H1 (cell line): ENCODE measurements at regions of chr18 and their contacts with region 1.

Region 1: GRCh38 chr18:31942999-31943865 is at the start of gene TRAPPC8:
- DNase-seq: peak; percentile 93 to 94
- H3K4me3 ChIP-seq: peak within 1 kb of the TSS; percentile 67 to 98 (median 98)
- H3K27ac ChIP-seq: peak within 1 kb of the TSS; percentile 93
- H3K4me1 ChIP-seq: peaks cover 0 to 10% (median 4%) of the 10 kb centered on the region in 4 experiments; a peak in 4 of 7 replicates
- H3K27me3 ChIP-seq: no peaks in the 10 kb centered on the region
- CTCF ChIP-seq: peak in 2 of 3 experiments; percentile 35 to 37; a peak in 3 of 4 replicates
- EP300 ChIP-seq: no peak; a peak in 1 of 3 replicates
- POLR2A ChIP-seq: peak; percentile 92 to 98
- RAD21 ChIP-seq: peak in 1 of 2 experiments; percentile 30; a peak in 1 of 4 replicates
- total RNA-seq, gene TRAPPC8: 43.6 and 49.9 TPM in 2 replicates

Region 2: DNA sequence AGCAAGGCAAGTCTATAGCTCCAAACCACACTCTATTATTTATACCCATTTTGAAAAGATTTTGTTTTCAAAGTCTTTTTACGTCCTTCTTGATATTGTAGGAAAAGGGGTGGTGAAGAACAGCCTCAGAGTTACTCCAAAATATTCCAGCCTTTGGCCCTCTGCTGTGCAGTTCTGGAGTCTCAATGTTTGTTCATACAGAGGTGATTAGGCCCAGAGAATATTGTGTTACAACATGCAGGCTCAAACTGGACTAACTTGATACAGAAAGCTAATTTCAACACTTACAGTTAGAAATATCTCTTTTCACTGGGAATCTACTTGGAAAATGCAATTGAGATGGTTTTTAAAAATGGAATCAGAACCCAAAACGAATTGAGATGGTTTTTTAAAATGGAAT is 142.2 kb before region 1 on chr18:
- CTCF ChIA-PET with region 1: no interaction called
- POLR2A ChIA-PET with region 1: no interaction called
- DNase-seq: no peak
- H3K4me3 ChIP-seq: no peak overlapping the region
- H3K27ac ChIP-seq: no peak overlapping the region
- H3K4me1 ChIP-seq: no peaks in the 10 kb centered on the region
- H3K27me3 ChIP-seq: peaks cover 0 to 1% (median 0%) of the 10 kb centered on the region in 4 experiments; a peak in 2 of 7 replicates
- CTCF ChIP-seq: no peak
- EP300 ChIP-seq: no peak
- POLR2A ChIP-seq: no peak
- RAD21 ChIP-seq: no peak

Region 3: GRCh38 chr18:31920277-31920676 is 23.0 kb before region 1 on chr18:
- CTCF ChIA-PET with region 1: interaction called, 3 read pairs
- POLR2A ChIA-PET with region 1: interaction called, 10 read pairs
- DNase-seq: no peak
- H3K4me3 ChIP-seq: no peak overlapping the region
- H3K27ac ChIP-seq: no peak overlapping the region
- H3K4me1 ChIP-seq: no peaks in the 10 kb centered on the region
- H3K27me3 ChIP-seq: no peaks in the 10 kb centered on the region
- CTCF ChIP-seq: no peak
- EP300 ChIP-seq: no peak
- POLR2A ChIP-seq: no peak
- RAD21 ChIP-seq: no peak

Region 4: DNA sequence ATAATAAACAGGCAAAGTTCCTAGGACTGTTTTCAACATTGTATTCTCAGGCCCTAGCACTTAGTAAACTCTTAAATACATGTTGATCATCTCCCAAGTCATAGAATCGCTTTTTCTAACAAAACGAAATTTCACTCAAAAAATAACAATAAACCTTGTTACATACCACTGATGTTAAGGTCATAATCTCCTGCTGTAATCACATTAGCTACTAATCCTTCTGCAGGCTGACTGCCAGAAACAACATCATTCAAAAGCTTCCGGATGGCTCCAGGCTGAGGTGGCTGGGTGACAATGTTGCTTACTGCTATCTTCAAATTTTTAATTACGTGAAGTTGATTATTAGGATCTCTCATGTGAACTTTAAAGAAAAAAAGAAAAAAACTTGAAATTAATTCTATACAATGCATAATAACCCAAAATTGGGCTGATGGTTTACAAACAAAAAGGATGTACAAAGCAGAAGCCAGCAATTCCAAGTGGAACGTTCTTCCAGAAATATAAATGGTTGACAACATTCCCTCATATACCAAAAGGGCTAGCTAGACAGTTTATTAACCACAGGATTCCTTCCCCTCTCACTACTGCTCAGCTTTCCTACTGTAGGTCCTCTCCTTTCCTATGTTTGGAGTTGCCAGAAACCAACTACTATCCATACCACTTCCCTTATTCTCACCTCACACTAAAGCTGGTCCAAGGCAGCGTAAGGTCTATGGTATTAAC is 11.9 kb before region 1 on chr18:
- CTCF ChIA-PET with region 1: interaction called, 3 read pairs
- POLR2A ChIA-PET with region 1: interaction called, 14 read pairs
- DNase-seq: no peak
- H3K4me3 ChIP-seq: no peak overlapping the region
- H3K27ac ChIP-seq: no peak overlapping the region
- H3K4me1 ChIP-seq: no peaks in the 10 kb centered on the region
- H3K27me3 ChIP-seq: no peaks in the 10 kb centered on the region
- CTCF ChIP-seq: no peak
- EP300 ChIP-seq: no peak
- POLR2A ChIP-seq: no peak
- RAD21 ChIP-seq: no peak

Region 5: DNA sequence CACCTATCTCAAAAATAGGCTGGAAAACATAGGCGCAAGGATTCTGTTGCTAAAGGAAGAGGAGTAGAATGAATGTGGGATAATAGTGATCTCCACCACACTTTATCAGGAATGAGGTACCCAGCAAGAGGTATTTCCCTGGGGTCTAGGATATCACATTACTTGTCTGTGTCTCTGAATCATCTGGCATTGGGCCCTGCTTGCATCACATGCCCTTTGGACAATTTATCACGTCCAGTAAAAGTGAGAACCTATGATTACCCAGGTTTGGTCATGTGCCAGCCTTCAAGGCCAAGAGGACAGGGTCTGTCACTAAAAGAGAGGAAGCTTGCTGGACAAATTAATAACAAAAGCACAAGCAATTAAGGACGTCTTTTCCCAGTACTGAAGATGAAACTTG is 11.1 kb after region 1 on chr18:
- CTCF ChIA-PET with region 1: interaction called, 18 read pairs
- POLR2A ChIA-PET with region 1: interaction called, 21 read pairs
- DNase-seq: no peak
- H3K4me3 ChIP-seq: no peak overlapping the region
- H3K27ac ChIP-seq: no peak overlapping the region
- H3K4me1 ChIP-seq: no peaks in the 10 kb centered on the region; a peak in 2 of 7 replicates
- H3K27me3 ChIP-seq: no peaks in the 10 kb centered on the region
- CTCF ChIP-seq: no peak
- EP300 ChIP-seq: no peak
- POLR2A ChIP-seq: no peak
- RAD21 ChIP-seq: no peak

Region 6: GRCh38 chr18:31990823-31991222 is 47.6 kb after region 1 on chr18:
- CTCF ChIA-PET with region 1: no interaction called
- POLR2A ChIA-PET with region 1: no interaction called
- DNase-seq: no peak
- H3K4me3 ChIP-seq: no peak overlapping the region
- H3K27ac ChIP-seq: no peak overlapping the region
- H3K4me1 ChIP-seq: peaks cover 0 to 4% (median 2%) of the 10 kb centered on the region in 4 experiments; a peak in 2 of 7 replicates
- H3K27me3 ChIP-seq: no peaks in the 10 kb centered on the region
- CTCF ChIP-seq: no peak
- EP300 ChIP-seq: no peak
- POLR2A ChIP-seq: no peak
- RAD21 ChIP-seq: no peak

Region 7: DNA sequence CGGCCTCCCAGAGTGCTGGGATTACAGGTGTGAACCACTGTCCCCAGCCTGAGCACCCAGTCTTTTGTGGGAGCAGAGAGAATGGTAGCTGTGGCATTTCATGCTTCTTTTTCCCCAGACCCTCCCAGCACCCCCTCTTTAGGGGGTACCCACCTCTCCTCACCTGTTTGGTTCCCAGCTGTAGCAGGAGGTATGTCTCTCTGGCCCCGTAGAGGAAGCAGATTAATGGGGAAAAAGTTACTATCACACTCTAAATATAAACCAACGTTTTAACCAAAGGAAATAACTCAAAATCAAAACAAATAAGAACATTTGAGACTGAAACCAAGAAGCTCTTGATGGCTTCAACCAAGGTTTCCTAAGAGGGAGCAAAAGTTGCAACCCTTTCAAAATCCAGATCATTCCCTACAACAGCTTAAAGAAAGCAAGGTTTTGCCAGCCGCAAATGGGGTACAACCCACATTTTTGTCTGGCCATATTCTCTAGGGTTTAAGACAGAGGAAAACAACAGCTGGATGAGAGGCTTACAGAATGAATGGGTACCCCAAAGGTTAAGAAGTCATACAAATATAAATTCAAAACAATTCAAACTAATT is 83.4 kb after region 1 on chr18:
- CTCF ChIA-PET with region 1: no interaction called
- POLR2A ChIA-PET with region 1: no interaction called
- DNase-seq: no peak
- H3K4me3 ChIP-seq: no peak overlapping the region
- H3K27ac ChIP-seq: no peak overlapping the region
- H3K4me1 ChIP-seq: peaks cover 0 to 8% (median 3%) of the 10 kb centered on the region in 4 experiments; a peak in 3 of 7 replicates
- H3K27me3 ChIP-seq: no peaks in the 10 kb centered on the region
- CTCF ChIP-seq: no peak
- EP300 ChIP-seq: no peak
- POLR2A ChIP-seq: no peak
- RAD21 ChIP-seq: no peak